ENCODE measurements at regions of chr11 and their contacts with region 1.

Region 1: DNA sequence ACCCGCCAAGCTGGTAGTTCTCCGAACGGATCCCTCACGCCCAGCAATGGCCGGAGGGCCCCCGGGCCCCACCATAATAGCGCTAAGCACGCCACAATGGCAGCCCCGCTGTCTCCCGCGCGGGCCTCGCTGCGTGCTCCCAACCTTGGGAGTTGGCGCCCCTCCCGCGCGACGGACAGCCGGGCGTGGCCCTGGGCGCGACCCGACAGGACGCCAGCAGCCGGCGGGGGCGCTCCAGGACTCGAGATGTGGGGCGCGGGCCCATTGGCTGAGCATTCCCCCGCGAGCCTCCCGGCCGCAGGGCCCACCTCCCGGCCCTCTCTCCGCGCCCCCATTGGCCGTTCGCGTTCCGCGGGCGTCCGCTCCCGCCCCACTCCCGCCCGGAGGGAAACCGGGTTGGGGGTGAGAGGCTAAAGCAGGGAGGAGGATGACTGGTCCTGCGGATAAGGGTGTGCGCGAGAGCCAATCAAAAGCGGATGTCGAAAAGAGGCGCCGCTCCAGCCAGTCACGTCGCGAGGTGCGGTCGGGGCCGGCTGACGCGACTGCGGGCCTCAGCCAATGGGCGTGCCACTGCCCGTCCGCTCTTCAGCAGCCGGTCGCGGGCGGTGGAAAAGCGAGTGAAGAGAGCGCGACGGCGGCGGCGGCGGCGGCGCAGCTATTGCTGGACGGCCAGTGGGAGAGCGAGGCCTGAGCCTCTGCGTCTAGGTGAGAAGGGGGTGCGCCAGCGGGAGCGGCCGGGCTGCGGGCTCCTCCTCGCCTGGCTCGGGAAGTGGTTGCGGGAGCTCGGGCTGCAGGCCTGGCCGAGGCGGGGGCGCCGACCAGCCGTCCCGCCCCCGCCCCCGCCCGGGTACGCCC is at the start of gene FAR1:
- DNase-seq: peak; percentile 98
- H3K4me3 Mint-ChIP-seq: peak within 1 kb of the TSS; percentile 95
- H3K27ac Mint-ChIP-seq: peak within 1 kb of the TSS; percentile 92
- H3K4me1 Mint-ChIP-seq: peaks cover 40% of the 10 kb centered on the region
- H3K27me3 Mint-ChIP-seq: peaks cover 7% of the 10 kb centered on the region
- total RNA-seq, gene FAR1: 37.2 to 42.3 TPM

Region 2: GRCh38 chr11:13183094-13183825 is 485.1 kb before region 1 on chr11:
- CTCF ChIA-PET with region 1: no interaction called
- intact Hi-C with region 1: no loop called
- DNase-seq: peak; percentile 13
- H3K4me3 Mint-ChIP-seq: no peak overlapping the region
- H3K27ac Mint-ChIP-seq: no peak overlapping the region
- H3K4me1 Mint-ChIP-seq: peaks cover 6% of the 10 kb centered on the region
- H3K27me3 Mint-ChIP-seq: peaks cover 9% of the 10 kb centered on the region

Region 3: GRCh38 chr11:13486926-13487660 is 181.2 kb before region 1 on chr11:
- CTCF ChIA-PET with region 1: interaction called, 5 read pairs
- intact Hi-C with region 1: loop called (anchors 1 kb)
- DNase-seq: peak; percentile 70
- H3K4me3 Mint-ChIP-seq: peak overlapping the region; percentile 62
- H3K27ac Mint-ChIP-seq: no peak overlapping the region
- H3K4me1 Mint-ChIP-seq: peaks cover 2% of the 10 kb centered on the region
- H3K27me3 Mint-ChIP-seq: peaks cover 5% of the 10 kb centered on the region

Region 4: DNA sequence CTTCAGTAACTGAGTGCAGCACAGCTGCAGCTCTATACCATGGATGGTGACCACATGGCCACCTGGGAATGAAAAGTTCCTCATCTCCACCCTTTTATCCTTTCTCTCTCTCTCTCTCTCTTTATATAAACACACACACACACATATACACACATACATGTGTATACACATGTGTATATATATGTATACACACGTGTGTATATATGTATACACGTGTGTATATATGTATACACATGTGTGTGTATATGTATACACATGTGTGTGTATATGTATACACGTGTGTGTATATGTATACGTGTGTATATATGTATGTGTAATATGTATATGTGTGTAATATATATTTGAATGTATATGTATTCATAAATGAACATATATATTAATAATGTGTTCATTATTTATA is 18.7 kb before region 1 on chr11:
- CTCF ChIA-PET with region 1: no interaction called
- intact Hi-C with region 1: no loop called
- DNase-seq: no peak
- H3K4me3 Mint-ChIP-seq: no peak overlapping the region
- H3K27ac Mint-ChIP-seq: no peak overlapping the region
- H3K4me1 Mint-ChIP-seq: no peaks in the 10 kb centered on the region
- H3K27me3 Mint-ChIP-seq: peaks cover 10% of the 10 kb centered on the region

Region 5: GRCh38 chr11:13928566-13929251 is 260.4 kb after region 1 on chr11:
- CTCF ChIA-PET with region 1: no interaction called
- intact Hi-C with region 1: loop called (anchors 10 kb)
- DNase-seq: peak; percentile 42
- H3K4me3 Mint-ChIP-seq: no peak overlapping the region
- H3K27ac Mint-ChIP-seq: no peak overlapping the region
- H3K4me1 Mint-ChIP-seq: peaks cover 31% of the 10 kb centered on the region
- H3K27me3 Mint-ChIP-seq: no peaks in the 10 kb centered on the region